Activated naive CD4-positive, alpha-beta T cell treated with anti-CD3 and anti-CD28 coated beads for 36 hours (primary cell): ENCODE measurements at regions of chr3 and their contacts with region 1.

Region 1: DNA sequence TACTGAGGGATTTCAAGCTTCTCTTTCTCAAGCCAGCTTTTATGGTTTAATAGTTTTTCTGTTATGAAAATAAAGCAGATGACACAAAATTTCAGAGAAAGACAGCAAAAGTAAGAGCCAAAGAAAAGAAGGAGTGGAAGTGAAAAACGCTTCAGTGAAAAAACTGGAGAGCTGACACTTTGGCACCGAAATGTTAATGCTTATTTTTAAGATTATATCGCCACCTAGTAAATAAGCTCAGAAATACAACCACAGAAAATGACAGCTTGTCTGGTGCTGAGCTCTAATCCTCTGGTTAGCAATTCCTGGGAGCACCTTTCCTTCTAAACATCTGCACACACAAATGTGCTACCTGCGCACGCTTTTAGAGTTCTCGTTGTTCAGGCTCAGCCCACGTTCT is 101.6 kb downstream of the ZPLD1 start:
- DNase-seq: no peak
- H3K4me3 Mint-ChIP-seq: no peak overlapping the region
- H3K27ac Mint-ChIP-seq: no peak overlapping the region
- H3K4me1 Mint-ChIP-seq: no peaks in the 10 kb centered on the region
- H3K27me3 Mint-ChIP-seq: peaks cover 2% of the 10 kb centered on the region

Region 2: DNA sequence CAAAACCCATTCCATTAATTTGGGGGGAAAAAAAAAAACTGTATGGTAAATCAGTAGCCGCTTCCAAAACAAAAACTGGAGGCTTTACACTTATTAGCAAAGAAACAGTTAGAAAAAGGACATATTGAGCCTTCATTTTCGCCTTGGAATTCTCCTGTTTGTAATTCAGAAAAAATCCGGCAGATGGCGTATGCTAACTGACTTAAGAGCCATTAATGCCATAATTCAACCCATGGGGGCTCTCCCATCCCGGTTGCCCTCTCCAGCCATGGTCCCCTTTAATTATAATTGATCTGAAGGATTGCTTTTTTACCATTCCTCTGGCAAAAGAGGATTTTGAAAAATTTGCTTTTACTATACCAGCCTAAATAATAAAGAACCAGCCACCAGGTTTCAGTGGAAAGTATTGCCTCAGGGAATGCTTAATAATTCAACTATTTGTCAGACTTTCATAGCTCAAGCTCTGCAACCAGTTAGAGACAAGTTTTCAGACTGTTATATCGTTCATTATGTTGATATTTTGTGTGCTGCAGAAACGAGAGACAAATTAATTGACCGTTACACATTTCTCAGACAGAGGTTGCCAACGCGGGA is 840.6 kb before region 1 on chr3:
- CTCF ChIA-PET with region 1: no interaction called
- intact Hi-C with region 1: loop called (anchors 2 kb)
- DNase-seq: peak; percentile 52
- H3K4me3 Mint-ChIP-seq: no peak overlapping the region
- H3K27ac Mint-ChIP-seq: no peak overlapping the region
- H3K4me1 Mint-ChIP-seq: peaks cover 7% of the 10 kb centered on the region
- H3K27me3 Mint-ChIP-seq: no peaks in the 10 kb centered on the region

Region 3: DNA sequence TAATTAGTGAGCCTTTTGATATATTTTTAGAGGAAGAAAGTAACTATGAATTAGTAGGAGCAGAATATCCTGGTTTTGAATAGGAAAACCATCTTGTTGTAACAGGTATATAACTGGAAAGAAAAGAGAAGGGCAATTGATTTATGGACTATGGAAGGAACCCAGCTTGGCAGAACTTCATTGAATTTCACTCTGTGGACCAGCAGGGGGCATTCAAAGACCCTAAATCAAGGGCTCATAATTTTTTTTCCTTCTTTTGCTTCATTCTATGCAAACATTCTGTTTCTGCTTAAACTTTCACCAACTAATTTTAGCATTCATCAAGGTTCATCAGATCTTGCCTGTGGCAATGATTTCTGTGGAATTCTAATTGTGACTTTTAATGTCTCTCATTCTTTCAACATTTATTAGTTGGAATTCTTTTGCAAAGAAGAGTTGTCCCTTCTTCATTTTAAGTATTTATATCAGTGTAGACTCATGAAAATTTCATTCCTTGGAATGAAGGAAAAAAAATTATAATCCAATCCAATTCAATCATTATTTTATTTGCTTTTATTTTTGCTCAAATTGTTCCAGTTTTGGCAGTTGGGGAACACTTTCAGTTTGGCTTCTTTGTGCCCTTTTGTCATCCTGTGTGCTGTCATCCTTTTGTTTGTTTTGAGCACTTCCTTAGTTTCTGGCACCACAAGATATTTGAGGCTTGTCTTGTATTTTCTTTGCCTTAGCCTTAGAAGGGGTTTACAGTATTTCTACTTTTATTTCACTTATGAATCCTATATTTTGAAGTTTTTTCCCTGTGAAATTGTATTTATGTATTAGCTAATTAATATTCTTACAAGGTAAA is 727.1 kb before region 1 on chr3:
- CTCF ChIA-PET with region 1: interaction called, 3 read pairs
- intact Hi-C with region 1: loop called (anchors 1 kb)
- DNase-seq: peak; percentile 49
- H3K4me3 Mint-ChIP-seq: no peak overlapping the region
- H3K27ac Mint-ChIP-seq: no peak overlapping the region
- H3K4me1 Mint-ChIP-seq: peaks cover 46% of the 10 kb centered on the region
- H3K27me3 Mint-ChIP-seq: no peaks in the 10 kb centered on the region